Panc1 (cell line): ENCODE measurements at regions of chr17 and their contacts with region 1.

Region 1: GRCh38 chr17:1709403-1709891 is 730 bp downstream of the TLCD2 start:
- DNase-seq: no peak
- ATAC-seq: no peak
- H3K4me3 ChIP-seq: peak overlapping the region; percentile 59 to 62
- H3K27ac ChIP-seq: peak overlapping the region; percentile 51; the same call in 1 of the 2 replicates
- H3K4me1 ChIP-seq: peaks cover 36% of the 10 kb centered on the region
- H3K27me3 ChIP-seq: no peaks in the 10 kb centered on the region
- CTCF ChIP-seq: no peak

Region 2: GRCh38 chr17:1541367-1541904 is 168.0 kb before region 1 on chr17:
- CTCF ChIA-PET with region 1: no interaction called
- POLR2A ChIA-PET with region 1: no interaction called
- in situ Hi-C with region 1: no loop called
- intact Hi-C with region 1: no loop called
- DNase-seq: no peak
- ATAC-seq: no peak
- H3K4me3 ChIP-seq: no peak overlapping the region
- H3K27ac ChIP-seq: no peak overlapping the region
- H3K4me1 ChIP-seq: no peaks in the 10 kb centered on the region
- H3K27me3 ChIP-seq: no peaks in the 10 kb centered on the region
- CTCF ChIP-seq: no peak

Region 3: DNA sequence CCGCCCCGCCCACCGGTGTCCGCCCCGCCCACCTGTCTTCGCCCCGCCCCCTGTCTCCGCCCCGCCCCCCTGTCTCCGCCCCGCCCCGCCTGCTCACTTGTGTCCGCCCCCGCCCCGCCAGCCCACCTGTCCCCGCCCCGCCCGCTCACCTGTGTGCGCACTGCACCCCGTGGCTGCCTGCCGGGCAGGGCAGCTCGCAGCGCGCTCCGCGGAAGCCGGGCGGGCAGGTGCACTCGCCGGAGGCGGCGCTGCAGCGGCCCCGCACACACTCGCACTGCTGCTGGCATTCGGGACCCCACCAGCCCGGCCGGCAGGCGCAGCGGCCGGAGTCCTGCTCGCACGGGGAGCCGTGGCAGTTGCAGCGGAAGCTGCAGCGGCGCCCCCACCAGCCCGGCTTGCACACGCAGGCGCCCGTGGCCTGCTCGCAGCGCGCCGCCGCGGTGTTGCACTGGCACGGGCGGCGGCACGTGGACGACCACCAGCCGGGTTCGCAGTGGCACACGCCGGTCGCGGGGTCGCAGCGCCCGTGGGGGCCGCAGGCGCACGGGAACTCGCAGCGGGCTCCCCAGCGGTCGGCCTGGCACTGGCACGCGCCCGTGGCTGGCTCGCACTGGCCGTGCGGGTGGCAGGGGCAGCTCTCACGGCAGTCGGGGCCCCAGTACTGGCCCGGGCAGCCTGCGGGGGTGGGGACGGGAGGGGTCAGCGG is 66.0 kb before region 1 on chr17:
- CTCF ChIA-PET with region 1: no interaction called
- POLR2A ChIA-PET with region 1: no interaction called
- in situ Hi-C with region 1: no loop called
- intact Hi-C with region 1: no loop called
- DNase-seq: no peak
- ATAC-seq: peak; percentile 54
- H3K4me3 ChIP-seq: peak overlapping the region; percentile 31 to 37
- H3K27ac ChIP-seq: no peak overlapping the region
- H3K4me1 ChIP-seq: peaks cover 14% of the 10 kb centered on the region
- H3K27me3 ChIP-seq: no peaks in the 10 kb centered on the region
- CTCF ChIP-seq: peak; percentile 35; the same call in 1 of the 2 replicates

Region 4: GRCh38 chr17:1673041-1673785 is 36.2 kb before region 1 on chr17:
- CTCF ChIA-PET with region 1: interaction called, 7 read pairs
- POLR2A ChIA-PET with region 1: interaction called, 11 read pairs
- in situ Hi-C with region 1: no loop called
- intact Hi-C with region 1: no loop called
- DNase-seq: no peak
- ATAC-seq: no peak; the same call in 1 of the 2 replicates
- H3K4me3 ChIP-seq: no peak overlapping the region
- H3K27ac ChIP-seq: no peak overlapping the region
- H3K4me1 ChIP-seq: no peaks in the 10 kb centered on the region
- H3K27me3 ChIP-seq: no peaks in the 10 kb centered on the region
- CTCF ChIP-seq: no peak